Colonic mucosa (tissue), 4 donors: ENCODE measurements at regions of chr12 and their contacts with region 1.

Region 1: DNA sequence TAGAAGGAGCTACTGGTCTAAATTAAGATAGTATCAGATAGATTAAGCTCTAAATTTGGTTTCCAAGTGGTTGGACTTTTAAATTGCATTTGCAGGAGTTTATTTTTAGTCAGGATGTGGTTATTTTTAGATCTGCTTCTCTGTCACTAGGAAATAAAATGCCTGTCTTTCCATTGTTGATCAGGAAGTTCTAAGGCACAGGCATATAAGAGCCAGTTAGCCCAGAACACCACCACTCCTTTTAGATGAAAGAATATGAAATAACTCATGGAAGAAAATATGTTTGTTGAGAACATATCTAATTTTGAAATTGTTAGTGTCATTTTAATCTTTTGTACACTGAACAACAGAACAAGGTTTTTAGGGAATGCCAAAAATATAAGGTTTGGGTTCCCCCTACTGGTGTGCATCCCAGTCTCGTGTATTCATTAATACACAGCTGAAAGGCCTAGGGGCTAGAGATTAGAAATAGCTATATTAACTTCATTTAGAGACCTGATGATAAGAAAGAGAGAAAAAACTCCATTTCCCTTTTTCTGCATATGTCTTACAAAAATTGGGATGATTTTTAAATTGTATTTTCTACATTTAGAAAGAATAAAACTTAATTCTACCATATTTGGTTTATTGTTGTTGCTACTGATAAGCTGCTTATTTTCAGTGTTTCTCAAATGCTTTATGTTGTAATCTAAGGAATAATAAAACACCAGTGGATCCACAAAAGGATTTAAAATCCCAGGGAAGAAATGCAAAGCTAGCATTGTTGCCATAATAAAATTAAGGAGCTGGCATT is 67.2 kb downstream of the RIC8B start:
- DNase-seq: peak; percentile 56
- H3K4me3 ChIP-seq: no peak overlapping the region
- H3K27ac ChIP-seq: no peak overlapping the region
- H3K4me1 ChIP-seq: no peaks in the 10 kb centered on the region
- H3K27me3 ChIP-seq: no peaks in the 10 kb centered on the region
- CTCF ChIP-seq: peak; percentile 52

Region 2: GRCh38 chr12:106386813-106387535 is 454.7 kb before region 1 on chr12:
- intact Hi-C with region 1: loop called (anchors 5 kb)
- DNase-seq: no peak
- H3K4me3 ChIP-seq: no peak overlapping the region
- H3K27ac ChIP-seq: no peak overlapping the region
- H3K4me1 ChIP-seq: no peaks in the 10 kb centered on the region
- H3K27me3 ChIP-seq: no peaks in the 10 kb centered on the region
- CTCF ChIP-seq: no peak

Region 3: GRCh38 chr12:106682592-106683234 is 159.0 kb before region 1 on chr12:
- intact Hi-C with region 1: loop called (anchors 5 kb)
- DNase-seq: no peak
- H3K4me3 ChIP-seq: no peak overlapping the region
- H3K27ac ChIP-seq: no peak overlapping the region
- H3K4me1 ChIP-seq: no peaks in the 10 kb centered on the region
- H3K27me3 ChIP-seq: no peaks in the 10 kb centered on the region
- CTCF ChIP-seq: peak; percentile 20

Region 4: DNA sequence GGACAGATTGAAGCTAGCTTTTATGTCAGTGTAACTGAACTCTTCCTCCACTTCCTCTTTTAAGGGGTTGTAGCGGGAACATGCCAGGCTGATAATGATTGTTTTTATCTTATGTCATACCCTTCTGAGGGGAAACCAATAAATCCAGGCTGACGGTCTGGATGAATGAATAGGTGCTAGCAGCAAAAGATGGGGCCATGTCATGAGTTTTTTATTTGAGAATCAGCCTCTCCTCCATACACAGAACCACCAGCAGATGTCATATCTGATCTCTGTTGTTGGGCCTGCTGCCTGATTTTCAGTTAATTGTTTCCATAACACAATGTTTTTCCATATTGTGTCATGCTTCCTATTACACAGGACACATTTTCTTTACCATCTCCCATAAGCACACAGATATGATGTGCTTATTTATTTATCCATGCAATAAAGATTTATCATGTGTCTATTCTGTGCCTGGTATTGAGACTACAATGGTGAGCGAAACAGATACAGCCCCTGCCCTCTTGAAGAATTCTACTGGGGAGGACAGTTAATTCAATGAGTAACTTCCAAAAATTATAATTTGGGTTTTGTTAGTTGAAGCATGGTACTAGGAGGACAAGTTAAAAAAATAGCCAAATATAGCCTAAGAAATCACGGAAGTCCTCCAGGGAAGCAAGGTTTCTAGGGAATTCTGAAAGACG is 285.2 kb after region 1 on chr12:
- intact Hi-C with region 1: no loop called
- DNase-seq: no peak
- H3K4me3 ChIP-seq: no peak overlapping the region
- H3K27ac ChIP-seq: no peak overlapping the region
- H3K4me1 ChIP-seq: no peaks in the 10 kb centered on the region
- H3K27me3 ChIP-seq: no peaks in the 10 kb centered on the region
- CTCF ChIP-seq: no peak